ENCODE measurements at regions of chr1 and their contacts with region 1.

Region 1: DNA sequence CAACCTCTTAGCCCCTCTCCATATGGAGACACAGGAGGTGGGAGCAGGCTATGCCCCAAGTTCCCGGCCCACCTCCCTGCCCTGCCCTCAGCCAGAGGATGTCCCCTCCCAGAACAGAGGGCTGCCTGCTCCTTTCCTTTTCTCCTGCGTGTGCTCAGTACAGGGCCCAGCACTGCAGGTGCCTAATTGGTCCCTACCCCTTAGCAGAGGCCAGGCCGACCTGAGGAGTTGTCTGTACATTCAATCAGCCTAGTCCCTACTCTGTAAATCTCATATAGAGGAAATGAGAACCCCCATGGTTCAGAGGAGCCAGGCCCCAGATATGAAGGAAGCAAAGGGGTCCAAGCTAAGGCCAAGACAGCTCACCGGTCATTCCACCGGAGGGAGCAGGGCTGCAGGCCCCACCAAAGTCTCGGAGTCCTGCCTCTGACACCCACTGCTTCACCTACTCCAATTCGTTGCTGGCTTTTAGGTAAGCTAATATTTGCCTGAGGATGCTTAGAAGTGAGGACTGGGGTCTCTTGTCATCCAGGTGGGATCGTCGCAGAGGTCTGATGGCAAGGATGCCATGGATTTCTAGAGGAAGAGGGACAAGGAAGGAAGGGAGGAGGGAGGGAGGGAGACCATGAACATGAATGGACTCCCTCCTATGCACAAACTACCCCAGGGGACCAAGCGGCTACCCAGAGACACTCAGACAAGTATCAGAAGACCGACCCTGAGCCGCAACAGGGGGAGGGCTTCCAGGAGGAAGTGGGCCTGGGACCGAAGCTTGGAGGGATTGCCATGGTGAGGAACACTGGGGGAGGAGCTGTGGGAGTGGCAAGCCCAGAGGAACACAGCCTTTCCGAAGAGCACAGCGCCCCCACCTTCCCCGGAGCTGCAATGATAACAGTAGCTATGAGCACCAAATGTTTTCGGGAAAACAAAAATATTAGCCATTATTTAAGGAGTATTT is 30.4 kb upstream of the FOXO6 start:
- DNase-seq: peak; percentile 47

Region 2: DNA sequence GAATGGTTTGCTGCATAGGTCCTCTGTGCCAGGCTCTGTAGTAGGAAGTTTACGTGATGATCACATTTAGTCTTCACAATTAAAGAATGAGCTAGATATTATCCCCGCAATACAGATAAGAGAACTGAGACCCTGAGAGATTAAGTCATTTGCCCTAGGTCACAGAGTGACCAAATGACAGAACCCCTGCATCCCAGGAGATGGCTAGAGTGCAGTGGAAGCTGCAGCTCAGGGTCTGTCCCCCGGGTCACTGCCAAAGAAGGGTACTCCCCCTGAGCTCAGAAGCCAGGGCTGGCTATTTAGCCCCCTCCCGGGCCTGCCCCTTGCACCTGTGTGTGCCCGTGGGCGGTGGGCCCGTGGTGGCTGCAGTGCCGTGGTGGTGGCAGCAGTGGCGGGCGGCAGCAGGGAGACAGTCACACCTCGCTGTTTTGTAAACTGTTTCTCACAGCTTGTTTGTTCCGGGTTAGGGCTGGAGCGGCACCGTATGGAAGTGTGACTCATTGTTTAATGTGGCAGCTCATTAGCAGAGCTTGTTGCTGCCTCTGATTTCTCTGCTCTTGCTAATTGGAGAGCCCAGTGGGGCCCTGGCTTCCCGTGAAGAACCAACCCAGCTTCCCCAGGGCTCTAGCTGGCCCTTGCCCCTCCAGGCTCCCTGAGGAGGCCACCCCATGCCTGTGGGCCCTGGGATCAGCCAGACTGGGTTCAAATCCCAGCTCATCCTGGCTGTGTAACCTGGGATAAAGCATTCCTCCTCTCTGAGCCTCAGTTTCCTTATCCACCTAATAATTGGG is 11.1 kb after region 1 on chr1:
- CTCF ChIA-PET with region 1: interaction called, 10 read pairs
- POLR2A ChIA-PET with region 1: no interaction called
- DNase-seq: no peak